ENCODE measurements at regions of chr19 and their contacts with region 1.

Region 1: GRCh38 chr19:16382775-16383543 is 58.3 kb downstream of the KLF2 start:
- DNase-seq: no peak
- ATAC-seq: peak; percentile 85
- H3K4me3 ChIP-seq: no peak overlapping the region
- H3K27ac ChIP-seq: peak overlapping the region; percentile 60
- H3K4me1 ChIP-seq: peaks cover 25% of the 10 kb centered on the region
- H3K27me3 ChIP-seq: no peaks in the 10 kb centered on the region
- CTCF ChIP-seq: peak; percentile 75 to 88 (median 80)
- EP300 ChIP-seq: no peak
- POLR2A ChIP-seq: peak; percentile 37; the same call in 1 of the 2 replicates
- RAD21 ChIP-seq: peak; percentile 85

Region 2: GRCh38 chr19:15629003-15629880 is 753.7 kb before region 1 on chr19:
- CTCF ChIA-PET with region 1: interaction called, 3 read pairs
- POLR2A ChIA-PET with region 1: no interaction called
- RAD21 ChIA-PET with region 1: no interaction called
- SMC1A ChIA-PET with region 1: no interaction called
- in situ Hi-C with region 1: loop called (anchors 25 kb)
- intact Hi-C with region 1: no loop called
- DNase-seq: peak; percentile 9
- ATAC-seq: peak; percentile 93
- H3K4me3 ChIP-seq: no peak overlapping the region
- H3K27ac ChIP-seq: no peak overlapping the region
- H3K4me1 ChIP-seq: no peaks in the 10 kb centered on the region
- H3K27me3 ChIP-seq: no peaks in the 10 kb centered on the region
- CTCF ChIP-seq: peak; percentile 90 to 96 (median 95)
- EP300 ChIP-seq: no peak
- POLR2A ChIP-seq: no peak
- RAD21 ChIP-seq: peak; percentile 93

Region 3: DNA sequence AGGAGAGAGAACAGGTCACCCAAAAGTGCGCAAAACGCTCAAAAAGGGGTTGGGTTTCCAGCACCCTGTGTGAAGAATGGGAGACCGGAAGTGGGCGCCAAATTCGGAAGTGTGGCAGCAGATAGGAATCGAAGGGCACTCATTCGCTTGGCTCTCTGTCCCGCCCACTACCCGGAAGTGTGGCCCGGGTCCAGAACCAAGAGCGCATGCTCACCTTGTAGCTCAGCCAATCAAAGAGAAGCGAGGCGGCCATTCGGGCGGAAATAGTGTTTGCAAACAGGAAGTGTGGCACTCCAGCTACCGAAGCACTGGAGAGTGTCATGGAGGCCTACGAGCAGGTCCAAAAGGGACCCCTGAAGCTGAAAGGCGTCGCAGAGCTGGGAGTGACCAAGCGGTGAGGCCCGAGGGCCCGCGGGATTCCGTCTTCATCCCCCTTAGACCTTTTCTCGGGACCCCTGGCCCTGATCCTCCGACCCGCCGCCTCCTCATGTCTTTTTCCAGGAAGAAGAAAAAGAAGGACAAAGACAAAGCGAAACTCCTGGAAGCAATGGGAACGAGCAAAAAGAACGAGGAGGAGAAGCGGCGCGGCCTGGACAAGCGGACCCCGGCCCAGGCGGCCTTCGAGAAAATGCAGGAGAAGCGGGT is 197.7 kb before region 1 on chr19 and contains the start of gene FAM32A:
- CTCF ChIA-PET with region 1: interaction called, 15 read pairs
- POLR2A ChIA-PET with region 1: no interaction called
- RAD21 ChIA-PET with region 1: interaction called, 7 read pairs
- SMC1A ChIA-PET with region 1: interaction called, 5 read pairs
- in situ Hi-C with region 1: no loop called
- intact Hi-C with region 1: no loop called
- DNase-seq: peak; percentile 98
- ATAC-seq: peak; percentile 94
- H3K4me3 ChIP-seq: peak within 1 kb of the TSS; percentile 82
- H3K27ac ChIP-seq: peak within 1 kb of the TSS; percentile 70
- H3K4me1 ChIP-seq: peaks cover 2% of the 10 kb centered on the region; the same call in 1 of the 2 replicates
- H3K27me3 ChIP-seq: no peaks in the 10 kb centered on the region
- CTCF ChIP-seq: no peak
- EP300 ChIP-seq: no peak
- POLR2A ChIP-seq: peak; percentile 93
- RAD21 ChIP-seq: no peak
- polyA plus RNA-seq, gene FAM32A: 33.3 to 43.0 TPM

Region 4: DNA sequence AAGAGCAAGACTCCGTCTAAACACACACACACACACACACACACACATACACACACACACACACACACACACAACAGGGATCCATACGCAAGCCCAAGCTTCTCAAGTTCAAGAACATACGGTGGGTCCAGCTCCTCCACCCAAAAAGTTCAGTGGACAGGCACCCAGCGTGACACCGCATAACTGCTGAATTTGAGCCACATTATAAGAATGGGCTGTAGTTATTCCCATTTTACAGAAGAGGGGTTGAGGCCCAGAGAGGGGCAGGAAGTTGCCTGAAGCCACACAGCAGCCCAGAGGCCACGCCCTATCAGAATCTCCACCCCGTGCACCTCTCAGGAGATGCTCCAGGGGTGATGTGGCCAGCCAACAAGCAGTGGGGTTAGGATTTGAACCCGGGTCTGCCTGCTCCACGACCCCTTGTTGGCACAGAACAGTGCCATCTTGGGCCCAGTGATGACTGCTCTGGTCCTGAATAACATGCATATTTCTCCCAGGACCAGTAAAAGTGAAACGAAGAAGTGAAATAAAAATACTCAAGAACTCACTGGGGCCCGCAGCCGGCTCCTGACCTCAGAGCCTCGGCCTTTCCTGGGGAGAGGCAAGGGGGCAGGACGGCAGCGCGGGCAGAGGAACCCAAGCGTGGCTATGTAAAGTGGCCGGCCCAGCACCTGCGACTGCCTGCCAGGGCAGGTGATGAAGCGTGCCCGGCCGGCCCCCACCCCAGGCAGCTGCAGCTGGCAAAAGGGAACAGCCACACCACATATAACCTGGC is 123.4 kb before region 1 on chr19:
- CTCF ChIA-PET with region 1: interaction called, 18 read pairs
- POLR2A ChIA-PET with region 1: interaction called, 4 read pairs
- RAD21 ChIA-PET with region 1: interaction called, 10 read pairs
- SMC1A ChIA-PET with region 1: interaction called, 4 read pairs
- in situ Hi-C with region 1: no loop called
- intact Hi-C with region 1: no loop called
- DNase-seq: peak; percentile 52
- ATAC-seq: peak; percentile 93
- H3K4me3 ChIP-seq: 0 out of 2 replicates have a peak overlapping the region, but pooled peaks have one; percentile 7
- H3K27ac ChIP-seq: peak overlapping the region; percentile 27; the same call in 1 of the 2 replicates
- H3K4me1 ChIP-seq: peaks cover 47% of the 10 kb centered on the region
- H3K27me3 ChIP-seq: no peaks in the 10 kb centered on the region; a peak in 1 of 4 replicates
- CTCF ChIP-seq: no peak
- EP300 ChIP-seq: no peak
- POLR2A ChIP-seq: no peak
- RAD21 ChIP-seq: no peak

Region 5: DNA sequence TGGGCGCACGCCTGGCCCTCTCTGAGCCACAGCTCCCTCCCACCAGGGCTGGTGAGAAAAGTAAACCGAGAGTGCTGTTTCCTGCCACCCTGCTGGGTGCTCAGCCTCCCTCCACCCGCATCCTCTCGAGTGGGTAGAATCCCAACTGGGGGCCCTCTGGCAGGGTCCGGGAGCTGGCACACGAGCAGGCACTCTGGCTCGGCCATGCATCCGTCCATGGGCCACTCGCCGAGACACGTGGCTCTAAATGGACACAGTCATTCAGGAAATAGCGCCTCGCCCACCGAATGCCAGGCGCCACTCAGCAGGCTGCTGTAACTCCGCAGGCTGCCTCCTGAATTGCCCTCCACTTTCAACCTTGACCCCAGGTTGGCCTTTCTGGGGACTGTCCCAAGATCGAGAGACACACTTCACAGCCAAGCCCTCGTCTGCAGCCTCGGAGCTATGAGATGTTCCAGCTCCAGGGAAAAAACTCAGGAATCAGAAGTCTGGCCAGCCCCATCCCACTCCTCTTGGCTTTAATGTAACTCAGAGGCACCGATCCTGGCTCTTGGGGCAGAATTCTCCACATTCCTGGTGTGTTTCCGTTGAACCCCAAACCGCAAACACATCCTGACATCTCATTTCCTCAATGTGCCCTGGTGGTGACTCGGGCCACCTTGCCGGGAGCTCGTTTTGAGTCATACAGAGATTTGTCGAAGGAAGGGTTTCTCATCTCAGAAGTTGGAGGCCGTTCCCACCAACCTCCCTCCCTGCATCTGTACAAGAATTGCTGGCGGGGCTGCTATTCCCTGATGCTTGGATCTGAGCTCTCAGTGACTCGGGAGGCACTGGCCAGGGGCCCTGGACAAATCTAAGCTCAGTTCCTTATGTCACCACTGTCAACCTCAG is 44.2 kb before region 1 on chr19:
- CTCF ChIA-PET with region 1: interaction called, 19 read pairs
- POLR2A ChIA-PET with region 1: interaction called, 3 read pairs
- RAD21 ChIA-PET with region 1: interaction called, 11 read pairs
- SMC1A ChIA-PET with region 1: interaction called, 27 read pairs
- in situ Hi-C with region 1: no loop called
- intact Hi-C with region 1: no loop called
- DNase-seq: peak; percentile 59
- ATAC-seq: peak; percentile 69
- H3K4me3 ChIP-seq: peak overlapping the region; percentile 25; the same call in 1 of the 2 replicates
- H3K27ac ChIP-seq: peak overlapping the region; percentile 34; the same call in 1 of the 2 replicates
- H3K4me1 ChIP-seq: peaks cover 46% of the 10 kb centered on the region
- H3K27me3 ChIP-seq: no peaks in the 10 kb centered on the region
- CTCF ChIP-seq: no peak
- EP300 ChIP-seq: peak; percentile 76 to 84; a peak in 3 of 4 replicates
- POLR2A ChIP-seq: no peak
- RAD21 ChIP-seq: no peak

Region 6: DNA sequence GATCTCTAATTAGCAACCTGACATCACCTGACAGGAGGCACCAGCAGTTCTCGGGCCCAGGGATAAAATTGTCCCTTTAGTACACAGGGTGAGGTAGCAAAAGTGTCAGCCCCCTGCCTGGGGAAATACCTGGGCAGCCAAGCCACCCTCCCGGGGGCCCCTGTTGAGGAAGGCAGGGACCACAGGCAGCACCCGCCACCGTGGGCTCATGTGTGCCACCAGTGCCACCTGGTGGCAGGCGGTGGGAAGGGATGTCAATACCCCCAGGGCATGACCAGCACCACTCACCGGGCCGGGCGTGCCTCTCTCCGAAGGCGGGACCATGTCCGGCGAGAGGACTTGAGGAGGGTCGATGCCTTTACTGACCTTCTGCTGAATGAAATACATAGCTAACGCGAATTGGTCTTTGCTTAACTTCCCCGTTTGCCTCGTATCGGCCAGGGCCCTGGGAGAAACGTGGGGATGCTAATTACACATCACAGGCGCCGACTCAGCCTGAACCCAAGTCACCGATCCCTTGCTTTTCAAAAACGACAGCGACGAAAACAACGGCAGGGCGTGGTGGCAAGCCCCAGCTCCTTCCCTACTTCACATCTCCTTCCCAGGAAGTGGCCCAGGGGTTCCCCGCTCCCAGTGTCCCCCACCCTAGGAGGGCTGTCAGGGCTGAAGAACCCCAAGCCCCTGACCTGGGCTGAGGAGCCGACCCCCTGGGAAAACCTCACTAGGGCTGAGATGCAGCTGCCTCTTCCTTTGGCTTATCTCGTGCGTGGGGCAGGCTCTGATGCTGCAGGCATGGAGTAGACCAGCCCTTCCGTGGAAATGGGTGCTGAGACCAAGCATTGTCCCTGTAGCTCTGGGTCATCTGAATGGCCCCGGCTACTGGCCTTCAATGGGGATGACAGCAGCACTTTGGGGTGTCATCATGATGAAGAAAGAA is 35.0 kb after region 1 on chr19:
- CTCF ChIA-PET with region 1: interaction called, 19 read pairs
- POLR2A ChIA-PET with region 1: no interaction called
- RAD21 ChIA-PET with region 1: interaction called, 3 read pairs
- SMC1A ChIA-PET with region 1: interaction called, 5 read pairs
- in situ Hi-C with region 1: no loop called
- intact Hi-C with region 1: no loop called
- DNase-seq: no peak
- ATAC-seq: peak; percentile 99
- H3K4me3 ChIP-seq: no peak overlapping the region
- H3K27ac ChIP-seq: no peak overlapping the region
- H3K4me1 ChIP-seq: no peaks in the 10 kb centered on the region
- H3K27me3 ChIP-seq: no peaks in the 10 kb centered on the region
- CTCF ChIP-seq: peak; percentile 85 to 90 (median 89)
- EP300 ChIP-seq: no peak
- POLR2A ChIP-seq: no peak
- RAD21 ChIP-seq: peak; percentile 81

Region 7: DNA sequence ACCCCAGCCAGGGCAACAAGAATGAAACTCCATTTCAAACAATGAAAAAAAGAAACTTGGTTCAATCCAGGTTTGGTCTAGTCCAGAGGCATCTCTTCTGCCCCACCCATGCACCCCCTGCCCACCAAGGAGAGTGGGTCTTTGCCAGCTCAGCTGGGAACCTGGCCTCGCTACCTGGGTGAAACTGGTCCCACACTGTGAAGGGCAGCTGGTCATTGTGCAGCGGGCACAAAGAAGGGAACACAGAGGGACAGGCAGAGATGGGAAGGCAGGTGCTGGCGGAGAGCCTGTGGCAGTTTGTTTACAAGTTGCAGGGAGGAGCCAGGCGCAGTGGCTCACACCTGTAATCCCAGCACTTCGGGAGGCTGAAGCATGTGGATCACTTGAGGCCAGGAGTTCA is 593.5 kb after region 1 on chr19:
- CTCF ChIA-PET with region 1: no interaction called
- POLR2A ChIA-PET with region 1: no interaction called
- RAD21 ChIA-PET with region 1: no interaction called
- SMC1A ChIA-PET with region 1: no interaction called
- in situ Hi-C with region 1: no loop called
- intact Hi-C with region 1: no loop called
- DNase-seq: no peak
- ATAC-seq: no peak
- H3K4me3 ChIP-seq: no peak overlapping the region
- H3K27ac ChIP-seq: no peak overlapping the region
- H3K4me1 ChIP-seq: no peaks in the 10 kb centered on the region
- H3K27me3 ChIP-seq: no peaks in the 10 kb centered on the region
- CTCF ChIP-seq: no peak
- EP300 ChIP-seq: no peak
- POLR2A ChIP-seq: no peak
- RAD21 ChIP-seq: no peak

Measured in GM12878 (cell line).